ENCODE measurements at regions of chr10 and their contacts with region 1.

Region 1: DNA sequence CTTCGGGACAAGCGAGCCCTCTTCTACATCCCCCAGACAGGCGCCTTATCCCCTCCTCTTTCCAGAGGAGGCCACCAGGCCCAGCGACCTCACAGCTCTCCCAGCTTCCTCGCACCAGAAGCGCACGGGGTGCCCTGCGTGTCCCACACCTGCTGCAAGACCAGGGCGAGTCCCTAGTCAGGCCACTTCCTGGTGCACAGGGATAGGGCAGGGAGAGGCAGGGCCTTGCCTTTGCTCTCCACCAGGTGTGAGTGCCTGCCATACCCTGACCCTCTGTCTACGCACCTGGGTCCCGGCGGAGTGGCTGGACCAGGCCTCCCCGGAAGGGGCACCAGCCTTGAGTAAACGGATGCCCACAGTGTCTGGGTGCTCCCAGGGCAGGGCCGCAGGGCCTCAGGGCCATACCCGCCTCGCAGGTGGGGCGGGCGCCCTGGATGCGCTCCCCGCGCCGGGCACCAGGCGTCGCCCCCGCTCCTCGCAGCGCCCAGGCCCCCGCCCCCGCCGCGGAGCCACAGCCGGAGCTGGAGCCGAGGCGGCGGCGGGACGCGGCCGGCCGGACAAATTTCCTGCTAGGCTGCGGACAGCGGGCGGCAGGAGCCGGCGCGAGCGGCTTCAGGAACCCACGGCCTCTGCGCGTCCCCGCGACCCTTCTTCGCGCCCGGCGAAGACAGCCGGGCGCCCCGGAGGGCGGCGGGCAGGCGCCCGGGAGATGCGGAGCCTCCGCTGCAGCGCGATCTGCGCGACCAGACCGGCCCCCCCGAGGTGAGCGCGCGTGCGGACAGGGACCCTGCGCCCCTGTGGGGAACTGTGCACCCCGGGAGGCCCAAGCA is at the start of gene PTPRE:
- DNase-seq: peak; percentile 81 to 87
- ATAC-seq: peak; percentile 92 to 97 (median 94)
- H3K4me3 ChIP-seq: peak within 1 kb of the TSS; percentile 72
- H3K27ac ChIP-seq: peak within 1 kb of the TSS; percentile 33
- H3K4me1 ChIP-seq: no peaks in the 10 kb centered on the region
- H3K27me3 ChIP-seq: peaks cover 0 to 9% (median 5%) of the 10 kb centered on the region in 3 donors
- CTCF ChIP-seq: peak; percentile 84
- total RNA-seq, gene PTPRE: 2.7 to 4.5 (median 3.8) TPM

Region 2: DNA sequence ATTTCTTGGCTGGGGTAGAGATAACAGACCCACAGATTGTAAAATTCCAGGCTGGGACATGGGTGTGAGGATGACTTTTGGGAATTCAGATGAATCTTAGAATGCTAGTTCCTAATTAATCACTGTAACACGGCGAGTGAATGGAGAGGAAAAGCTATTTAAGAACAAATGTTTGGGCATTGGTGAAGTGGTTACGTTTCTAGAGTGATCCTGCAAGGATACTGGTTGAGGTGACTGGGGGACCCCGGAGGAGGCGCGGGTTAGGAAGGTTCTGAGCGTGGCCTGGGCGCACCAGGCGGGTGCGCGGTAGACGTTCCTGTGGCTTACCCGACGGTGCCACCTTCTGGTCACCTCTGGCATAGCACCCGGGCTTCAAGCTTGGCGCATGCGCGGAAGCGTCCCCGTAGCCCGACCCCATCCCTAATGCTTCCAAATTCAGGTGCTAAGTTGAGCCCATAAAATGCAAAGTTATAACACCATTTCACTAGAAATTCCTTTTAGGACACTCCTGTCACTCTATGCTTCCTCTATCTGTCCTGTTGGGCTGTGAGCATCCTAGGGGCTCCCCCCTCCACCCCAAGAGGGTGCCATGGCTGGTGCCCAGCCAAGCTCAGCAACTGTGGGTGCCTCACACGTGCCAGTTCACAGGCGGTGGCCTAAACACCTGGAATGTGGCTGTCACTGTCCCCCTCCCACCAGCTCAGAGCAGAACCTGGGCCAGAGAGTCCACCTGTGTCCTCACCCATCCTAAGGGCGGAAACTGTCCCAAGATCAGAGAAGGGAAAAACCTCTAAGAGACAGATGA is 104.6 kb after region 1 on chr10:
- intact Hi-C with region 1: loop called (anchors 1 to 2 kb)
- DNase-seq: peak; percentile 82 to 90
- ATAC-seq: peak; percentile 92 to 96 (median 94)
- H3K4me3 ChIP-seq: no peak overlapping the region
- H3K27ac ChIP-seq: no peak overlapping the region
- H3K4me1 ChIP-seq: no peaks in the 10 kb centered on the region
- H3K27me3 ChIP-seq: no peaks in the 10 kb centered on the region
- CTCF ChIP-seq: peak; percentile 98

Region 3: GRCh38 chr10:128069351-128070051 is 162.7 kb after region 1 on chr10:
- intact Hi-C with region 1: loop called (anchors 2 to 5 kb)
- DNase-seq: peak; percentile 64 to 86
- ATAC-seq: peak; percentile 60 to 71 (median 66)
- H3K4me3 ChIP-seq: no peak overlapping the region
- H3K27ac ChIP-seq: no peak overlapping the region
- H3K4me1 ChIP-seq: peaks cover 6% of the 10 kb centered on the region
- H3K27me3 ChIP-seq: no peaks in the 10 kb centered on the region
- CTCF ChIP-seq: peak; percentile 78

Region 4: GRCh38 chr10:128081720-128082119 is 175.0 kb after region 1 on chr10:
- intact Hi-C with region 1: no loop called
- DNase-seq: no peak
- ATAC-seq: no peak
- H3K4me3 ChIP-seq: no peak overlapping the region
- H3K27ac ChIP-seq: no peak overlapping the region
- H3K4me1 ChIP-seq: no peaks in the 10 kb centered on the region
- H3K27me3 ChIP-seq: peaks cover 0 to 4% (median 0%) of the 10 kb centered on the region in 3 donors
- CTCF ChIP-seq: no peak

Measured in psoas muscle (tissue), 8 donors.